ENCODE measurements at regions of chr17 and their contacts with region 1.

Region 1: GRCh38 chr17:31373150-31374093 is 18.1 kb upstream of the RAB11FIP4 start:
- DNase-seq: peak; percentile 84
- H3K4me3 Mint-ChIP-seq: no peak overlapping the region
- H3K27ac Mint-ChIP-seq: no peak overlapping the region
- H3K4me1 Mint-ChIP-seq: peaks cover 12% of the 10 kb centered on the region
- H3K27me3 Mint-ChIP-seq: no peaks in the 10 kb centered on the region

Region 2: DNA sequence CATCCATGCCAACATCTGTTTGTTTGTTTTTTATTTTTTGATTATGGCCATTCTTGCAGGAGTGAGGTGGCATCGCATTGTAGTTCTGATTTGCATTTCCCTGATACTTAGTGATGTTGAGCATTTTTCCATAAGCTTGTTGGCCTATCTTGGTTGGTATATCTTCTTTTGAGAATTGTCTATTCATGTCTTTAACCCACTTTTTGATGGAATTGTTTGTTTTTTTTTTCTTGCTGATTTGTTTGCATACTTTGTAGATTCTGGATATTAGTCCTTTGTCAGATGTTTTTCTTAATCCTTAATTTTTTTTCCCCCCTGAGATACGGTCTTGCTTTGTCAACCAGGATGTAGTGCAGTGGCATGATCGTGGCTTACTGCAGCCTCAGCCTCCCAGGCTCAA is 359.6 kb before region 1 on chr17:
- intact Hi-C with region 1: loop called (anchors 2 kb)
- DNase-seq: no peak
- H3K4me3 Mint-ChIP-seq: no peak overlapping the region
- H3K27ac Mint-ChIP-seq: no peak overlapping the region
- H3K4me1 Mint-ChIP-seq: peaks cover 7% of the 10 kb centered on the region
- H3K27me3 Mint-ChIP-seq: peaks cover 13% of the 10 kb centered on the region

Region 3: DNA sequence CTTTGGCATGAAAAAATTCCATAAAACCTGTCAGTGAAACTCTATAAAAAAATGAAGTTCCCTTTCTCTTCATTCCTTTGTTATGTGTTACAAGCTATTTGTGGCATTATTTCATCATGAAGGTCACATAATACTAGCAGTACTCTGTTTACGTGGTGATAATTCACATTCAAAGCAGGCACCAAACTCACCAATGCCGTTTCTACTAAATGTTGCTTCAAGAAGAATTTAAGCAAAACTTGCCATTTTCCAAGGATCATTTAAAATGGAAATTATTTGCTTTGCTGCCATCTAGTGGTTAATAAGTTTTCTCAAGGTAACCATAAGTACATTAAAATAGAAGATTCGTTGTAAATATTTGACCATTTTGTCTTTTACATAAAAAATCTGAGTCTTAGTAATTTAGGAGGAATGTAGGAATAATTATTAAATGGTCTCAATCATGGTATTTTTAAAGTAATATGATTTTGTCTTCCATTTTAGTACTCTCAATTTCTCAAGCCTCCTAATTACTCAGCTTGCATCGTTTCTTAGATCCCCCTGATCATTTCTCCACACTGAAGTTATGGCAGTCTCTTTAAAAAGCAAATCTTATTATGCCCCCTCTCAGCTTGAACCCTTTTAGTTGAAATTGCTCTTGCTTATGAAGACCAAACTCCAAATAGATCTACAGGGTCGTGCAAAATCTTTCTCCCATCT is 157.2 kb before region 1 on chr17:
- intact Hi-C with region 1: loop called (anchors 5 kb)
- DNase-seq: no peak
- H3K4me3 Mint-ChIP-seq: no peak overlapping the region
- H3K27ac Mint-ChIP-seq: no peak overlapping the region
- H3K4me1 Mint-ChIP-seq: no peaks in the 10 kb centered on the region
- H3K27me3 Mint-ChIP-seq: no peaks in the 10 kb centered on the region

Region 4: DNA sequence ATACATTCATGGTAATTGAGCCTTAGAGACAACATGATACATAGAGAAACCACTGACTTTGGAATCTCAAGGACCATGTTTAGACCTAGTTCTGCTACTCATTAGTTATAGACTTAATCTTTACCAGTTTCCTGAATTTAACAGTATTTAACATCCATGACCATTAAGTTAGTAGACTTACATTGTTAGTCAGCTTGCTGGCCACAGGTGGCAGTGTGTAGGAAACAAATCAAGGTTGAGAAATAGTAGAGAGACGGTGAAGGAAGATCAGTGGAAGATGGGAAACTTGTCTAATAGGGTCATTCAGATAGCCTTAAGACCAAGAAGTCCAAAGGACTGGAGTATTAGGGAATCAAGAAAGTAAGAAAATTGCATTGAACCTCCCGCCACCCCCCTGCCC is 107.4 kb before region 1 on chr17:
- intact Hi-C with region 1: loop called (anchors 1 kb)
- DNase-seq: peak; percentile 60
- H3K4me3 Mint-ChIP-seq: no peak overlapping the region
- H3K27ac Mint-ChIP-seq: no peak overlapping the region
- H3K4me1 Mint-ChIP-seq: no peaks in the 10 kb centered on the region
- H3K27me3 Mint-ChIP-seq: no peaks in the 10 kb centered on the region

Region 5: GRCh38 chr17:31321481-31321880 is 51.9 kb before region 1 on chr17 and contains the start of gene EVI2A:
- intact Hi-C with region 1: loop called (anchors 2 kb)
- DNase-seq: peak; percentile 94
- H3K4me3 Mint-ChIP-seq: peak within 1 kb of the TSS; percentile 89
- H3K27ac Mint-ChIP-seq: peak within 1 kb of the TSS; percentile 97
- H3K4me1 Mint-ChIP-seq: peaks cover 26% of the 10 kb centered on the region
- H3K27me3 Mint-ChIP-seq: no peaks in the 10 kb centered on the region
- total RNA-seq, gene EVI2A: 30.4 and 31.5 TPM in 2 replicates

Region 6: GRCh38 chr17:31425282-31426040 is 52.0 kb after region 1 on chr17:
- intact Hi-C with region 1: no loop called
- DNase-seq: no peak
- H3K4me3 Mint-ChIP-seq: no peak overlapping the region
- H3K27ac Mint-ChIP-seq: no peak overlapping the region
- H3K4me1 Mint-ChIP-seq: no peaks in the 10 kb centered on the region
- H3K27me3 Mint-ChIP-seq: peaks cover 7% of the 10 kb centered on the region

Region 7: GRCh38 chr17:31508288-31509094 is 135.1 kb after region 1 on chr17:
- intact Hi-C with region 1: no loop called
- DNase-seq: peak; percentile 94
- H3K4me3 Mint-ChIP-seq: peak overlapping the region; percentile 83
- H3K27ac Mint-ChIP-seq: peak overlapping the region; percentile 99
- H3K4me1 Mint-ChIP-seq: peaks cover 47% of the 10 kb centered on the region
- H3K27me3 Mint-ChIP-seq: no peaks in the 10 kb centered on the region